Esophagus muscularis mucosa (tissue), 4 donors: ENCODE measurements at regions of chr2 and their contacts with region 1.

Region 1: GRCh38 chr2:25700221-25700660 is 26.9 kb upstream of the DTNB start:
- DNase-seq: no peak
- H3K4me3 ChIP-seq: no peak overlapping the region
- H3K27ac ChIP-seq: no peak overlapping the region
- H3K4me1 ChIP-seq: peaks cover 6 to 13% (median 9%) of the 10 kb centered on the region in 4 donors
- H3K27me3 ChIP-seq: no peaks in the 10 kb centered on the region
- CTCF ChIP-seq: peak; percentile 64 to 80 (median 68)
- EP300 ChIP-seq: no peak
- POLR2A ChIP-seq: no peak

Region 2: DNA sequence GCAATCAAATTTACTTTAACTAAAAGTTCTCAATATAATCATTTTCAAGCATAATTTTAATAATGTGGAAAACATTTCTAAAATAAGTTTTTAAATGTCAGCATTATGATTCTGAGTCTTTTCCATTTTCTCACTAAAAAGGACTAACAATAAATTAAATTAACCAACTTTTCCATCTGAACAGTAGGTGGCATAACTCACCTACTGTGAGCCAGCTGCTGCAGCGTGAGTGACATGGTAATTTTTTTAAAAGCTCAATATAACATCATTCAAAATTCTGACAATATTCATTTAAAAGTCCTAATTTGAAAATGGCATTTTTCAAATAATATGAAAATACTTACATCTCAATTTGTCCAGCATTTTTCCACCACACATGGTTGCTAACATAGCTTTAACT is 93.3 kb before region 1 on chr2:
- intact Hi-C with region 1: loop called (anchors 5 kb)
- DNase-seq: no peak
- H3K4me3 ChIP-seq: no peak overlapping the region
- H3K27ac ChIP-seq: no peak overlapping the region
- H3K4me1 ChIP-seq: no peaks in the 10 kb centered on the region
- H3K27me3 ChIP-seq: no peaks in the 10 kb centered on the region
- CTCF ChIP-seq: peak; percentile 50 to 60 (median 56)
- EP300 ChIP-seq: no peak
- POLR2A ChIP-seq: no peak